ENCODE measurements at regions of chr20 and their contacts with region 1.

Region 1: GRCh38 chr20:49323622-49324238 is 45.9 kb upstream of the ZNFX1 start:
- DNase-seq: no peak
- ATAC-seq: peak; percentile 12 to 71 (median 52)
- H3K4me3 ChIP-seq: no peak overlapping the region
- H3K27ac ChIP-seq: peak overlapping the region in 1 of 10 donors; percentile 61
- H3K4me1 ChIP-seq: peaks cover 3 to 20% (median 8%) of the 10 kb centered on the region in 9 donors
- H3K27me3 ChIP-seq: peaks cover 0 to 67% (median 41%) of the 10 kb centered on the region in 7 donors
- CTCF ChIP-seq: peak in 5 of 9 donors; percentile 21 to 44 (median 33)

Region 2: GRCh38 chr20:49122920-49123319 is 200.8 kb before region 1 on chr20:
- intact Hi-C with region 1: no loop called
- DNase-seq: no peak
- ATAC-seq: no peak
- H3K4me3 ChIP-seq: no peak overlapping the region
- H3K27ac ChIP-seq: no peak overlapping the region
- H3K4me1 ChIP-seq: no peaks in the 10 kb centered on the region
- H3K27me3 ChIP-seq: no peaks in the 10 kb centered on the region
- CTCF ChIP-seq: no peak

Region 3: GRCh38 chr20:49245921-49246740 is 77.6 kb before region 1 on chr20:
- intact Hi-C with region 1: loop called in 2 of 10 experiments (anchors 5 kb)
- DNase-seq: no peak
- ATAC-seq: peak; percentile 40 to 75 (median 62)
- H3K4me3 ChIP-seq: no peak overlapping the region
- H3K27ac ChIP-seq: peak overlapping the region in 2 of 10 donors; percentile 11 to 24
- H3K4me1 ChIP-seq: peaks cover 0 to 39% (median 12%) of the 10 kb centered on the region in 9 donors
- H3K27me3 ChIP-seq: no peaks in the 10 kb centered on the region
- CTCF ChIP-seq: peak; percentile 25 to 65 (median 52)